SK-N-SH (cell line): ENCODE measurements at regions of chrX and their contacts with region 1.

Region 1: GRCh38 chrX:153554519-153555167 is 37.2 kb downstream of the ATP2B3 start:
- DNase-seq: peak; percentile 85
- H3K4me3 ChIP-seq: no peak overlapping the region
- H3K27ac ChIP-seq: no peak overlapping the region
- H3K4me1 ChIP-seq: no peaks in the 10 kb centered on the region
- H3K27me3 ChIP-seq: peaks cover 74% of the 10 kb centered on the region
- CTCF ChIP-seq: peak; percentile 77
- EP300 ChIP-seq: no peak
- RAD21 ChIP-seq: peak; percentile 80

Region 2: DNA sequence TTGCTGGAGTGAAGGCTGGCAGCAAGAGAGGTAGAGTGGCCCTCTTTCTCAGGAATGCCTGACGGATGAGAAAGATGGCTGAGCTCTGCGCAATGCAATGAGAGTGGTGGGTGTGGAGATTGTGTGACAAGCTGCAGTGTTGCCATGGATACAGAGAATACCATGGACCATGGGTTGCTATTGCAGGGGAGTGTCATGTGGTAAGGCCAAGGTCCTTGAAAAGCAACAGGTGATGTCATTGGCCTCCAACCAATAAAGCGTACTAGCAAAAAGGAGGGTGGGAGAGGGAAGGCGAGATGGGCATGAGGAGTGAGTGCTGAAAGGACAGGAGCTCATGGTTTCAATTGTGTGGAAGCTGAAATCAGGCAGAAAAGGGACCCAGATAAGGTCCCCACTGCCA is 562.5 kb before region 1 on chrX:
- CTCF ChIA-PET with region 1: no interaction called
- POLR2A ChIA-PET with region 1: no interaction called
- DNase-seq: no peak
- H3K4me3 ChIP-seq: no peak overlapping the region
- H3K27ac ChIP-seq: no peak overlapping the region
- H3K4me1 ChIP-seq: no peaks in the 10 kb centered on the region
- H3K27me3 ChIP-seq: peaks cover 21% of the 10 kb centered on the region
- CTCF ChIP-seq: no peak
- EP300 ChIP-seq: no peak
- RAD21 ChIP-seq: no peak

Region 3: GRCh38 chrX:153568451-153569011 is 13.9 kb after region 1 on chrX:
- CTCF ChIA-PET with region 1: interaction called, 27 read pairs
- POLR2A ChIA-PET with region 1: no interaction called
- DNase-seq: no peak
- H3K4me3 ChIP-seq: no peak overlapping the region
- H3K27ac ChIP-seq: no peak overlapping the region
- H3K4me1 ChIP-seq: no peaks in the 10 kb centered on the region
- H3K27me3 ChIP-seq: peaks cover 53% of the 10 kb centered on the region
- CTCF ChIP-seq: no peak
- EP300 ChIP-seq: no peak
- RAD21 ChIP-seq: no peak

Region 4: DNA sequence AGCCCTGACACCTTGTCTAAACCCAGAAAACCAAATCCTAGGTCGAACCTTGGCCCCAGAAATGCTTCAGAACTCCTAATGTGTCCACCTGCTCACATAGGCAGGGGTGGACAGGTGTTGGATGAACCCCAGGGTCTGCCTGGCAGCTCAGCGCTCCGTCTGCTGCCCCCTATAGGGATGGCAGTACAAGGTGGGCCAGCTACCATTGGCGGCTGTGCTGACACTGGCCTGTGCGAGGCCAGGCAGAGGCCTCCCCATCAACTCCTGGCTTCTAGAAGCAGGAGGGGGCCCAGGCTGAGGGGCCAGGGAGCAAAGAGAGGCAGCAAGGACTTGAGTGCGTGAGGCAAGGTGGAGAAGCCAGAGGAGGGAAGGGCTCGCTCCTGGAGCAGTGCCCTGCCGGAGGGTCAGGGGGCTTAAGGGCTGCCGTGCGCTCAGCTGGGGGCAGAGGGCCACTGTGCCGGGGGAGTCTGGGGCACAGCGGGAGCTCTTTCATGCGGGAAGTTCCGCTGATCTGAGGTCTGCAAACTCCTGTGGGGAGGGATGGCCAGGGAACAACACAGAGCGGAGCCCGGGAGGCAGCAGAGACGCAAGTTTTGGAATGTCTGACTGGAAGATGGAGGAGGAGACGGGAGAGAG is 23.7 kb after region 1 on chrX:
- CTCF ChIA-PET with region 1: interaction called, 14 read pairs
- POLR2A ChIA-PET with region 1: no interaction called
- DNase-seq: no peak
- H3K4me3 ChIP-seq: no peak overlapping the region
- H3K27ac ChIP-seq: no peak overlapping the region
- H3K4me1 ChIP-seq: peaks cover 0 to 13% of the 10 kb centered on the region in 2 experiments; a peak in 1 of 4 replicates
- H3K27me3 ChIP-seq: peaks cover 83% of the 10 kb centered on the region
- CTCF ChIP-seq: 0 out of 2 replicates have a peak, but pooled peaks have one; percentile 14
- EP300 ChIP-seq: no peak
- RAD21 ChIP-seq: no peak

Region 5: DNA sequence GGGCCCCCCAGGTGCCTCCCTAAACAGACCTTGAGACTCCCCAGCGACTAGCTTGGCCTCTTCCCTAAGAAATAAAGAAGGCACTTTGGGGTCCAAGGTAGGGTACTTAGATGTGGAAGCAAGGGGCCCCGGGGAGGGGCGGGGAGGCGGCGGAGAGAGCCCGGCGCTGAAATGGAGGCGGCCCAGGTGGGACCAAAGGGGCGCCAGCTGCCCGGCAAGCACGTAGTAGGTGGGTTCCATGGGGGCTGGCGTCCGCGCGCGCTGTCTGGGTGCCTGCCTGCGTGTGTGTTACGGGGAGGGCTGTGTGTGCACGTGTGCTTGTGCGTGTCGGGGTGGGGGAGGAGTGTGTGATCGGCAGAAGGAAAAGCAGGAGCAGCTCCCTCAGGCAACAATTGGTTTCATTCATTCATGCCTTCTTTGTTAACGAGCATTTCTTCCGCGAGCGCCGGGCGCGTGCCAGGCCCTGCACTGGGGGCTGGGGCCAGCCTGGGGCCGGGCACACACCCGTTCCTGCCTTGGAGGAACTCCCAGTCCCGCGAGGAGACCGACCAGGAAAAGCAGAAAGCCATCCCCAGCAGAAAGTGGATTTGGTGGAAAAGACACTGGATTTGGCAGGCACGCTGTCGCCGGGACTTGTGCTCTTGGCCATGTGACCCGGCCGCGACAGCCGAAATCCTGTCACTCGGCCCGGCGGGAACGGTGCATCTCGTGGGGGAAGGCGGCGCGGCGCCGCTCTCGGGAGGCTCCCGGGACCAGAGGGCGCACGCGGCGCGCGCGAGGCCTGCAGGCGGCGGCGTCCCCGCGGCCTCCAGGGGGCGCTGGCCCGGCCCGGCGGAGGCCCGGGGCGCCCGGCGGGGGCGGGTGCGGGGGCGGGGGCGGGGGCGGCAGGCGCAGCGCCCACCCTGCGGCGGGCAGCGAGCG is 89.0 kb after region 1 on chrX:
- CTCF ChIA-PET with region 1: interaction called, 26 read pairs
- POLR2A ChIA-PET with region 1: no interaction called
- DNase-seq: peak; percentile 83
- H3K4me3 ChIP-seq: peak overlapping the region; percentile 32 to 35; a peak in 3 of 4 replicates
- H3K27ac ChIP-seq: no peak overlapping the region
- H3K4me1 ChIP-seq: peaks cover 0 to 15% of the 10 kb centered on the region in 2 experiments; a peak in 1 of 4 replicates
- H3K27me3 ChIP-seq: peaks cover 69% of the 10 kb centered on the region
- CTCF ChIP-seq: peak; percentile 26; the same call in 1 of the 2 replicates
- EP300 ChIP-seq: no peak
- RAD21 ChIP-seq: no peak

Region 6: GRCh38 chrX:153649178-153649914 is 94.7 kb after region 1 on chrX:
- CTCF ChIA-PET with region 1: interaction called, 26 read pairs
- POLR2A ChIA-PET with region 1: no interaction called
- DNase-seq: peak; percentile 84
- H3K4me3 ChIP-seq: no peak overlapping the region
- H3K27ac ChIP-seq: no peak overlapping the region
- H3K4me1 ChIP-seq: peaks cover 0 to 3% of the 10 kb centered on the region in 2 experiments; a peak in 1 of 4 replicates
- H3K27me3 ChIP-seq: peaks cover 37% of the 10 kb centered on the region
- CTCF ChIP-seq: peak; percentile 46
- EP300 ChIP-seq: no peak
- RAD21 ChIP-seq: peak; percentile 66

Region 7: GRCh38 chrX:153708415-153708814 is 153.8 kb after region 1 on chrX:
- CTCF ChIA-PET with region 1: interaction called, 11 read pairs
- POLR2A ChIA-PET with region 1: no interaction called
- DNase-seq: peak; percentile 83
- H3K4me3 ChIP-seq: no peak overlapping the region
- H3K27ac ChIP-seq: peak overlapping the region in 1 of 2 experiments; percentile 27; a peak in 1 of 4 replicates
- H3K4me1 ChIP-seq: peaks cover 0 to 6% of the 10 kb centered on the region in 2 experiments; a peak in 1 of 4 replicates
- H3K27me3 ChIP-seq: peaks cover 16% of the 10 kb centered on the region; the same call in 1 of the 2 replicates
- CTCF ChIP-seq: peak; percentile 70
- EP300 ChIP-seq: no peak
- RAD21 ChIP-seq: peak; percentile 80